ENCODE measurements at regions of chr5 and their contacts with region 1.

Region 1: GRCh38 chr5:79448336-79448735 is 65.6 kb downstream of the HOMER1 start:
- DNase-seq: no peak
- ATAC-seq: no peak
- H3K4me3 ChIP-seq: no peak overlapping the region
- H3K4me3 Mint-ChIP-seq: no peak overlapping the region
- H3K27ac ChIP-seq: no peak overlapping the region
- H3K27ac Mint-ChIP-seq: no peak overlapping the region
- H3K4me1 ChIP-seq: no peaks in the 10 kb centered on the region
- H3K4me1 Mint-ChIP-seq: no peaks in the 10 kb centered on the region
- H3K27me3 ChIP-seq: no peaks in the 10 kb centered on the region
- H3K27me3 Mint-ChIP-seq: no peaks in the 10 kb centered on the region
- CTCF ChIP-seq: no peak

Region 2: GRCh38 chr5:79120216-79120615 is 328.1 kb before region 1 on chr5:
- CTCF ChIA-PET with region 1: no interaction called
- POLR2A ChIA-PET with region 1: no interaction called
- intact Hi-C with region 1: no loop called
- DNase-seq: no peak
- ATAC-seq: no peak
- H3K4me3 ChIP-seq: no peak overlapping the region
- H3K4me3 Mint-ChIP-seq: no peak overlapping the region
- H3K27ac ChIP-seq: no peak overlapping the region
- H3K27ac Mint-ChIP-seq: no peak overlapping the region
- H3K4me1 ChIP-seq: no peaks in the 10 kb centered on the region
- H3K4me1 Mint-ChIP-seq: no peaks in the 10 kb centered on the region
- H3K27me3 ChIP-seq: no peaks in the 10 kb centered on the region
- H3K27me3 Mint-ChIP-seq: peaks cover 25% of the 10 kb centered on the region
- CTCF ChIP-seq: no peak

Region 3: DNA sequence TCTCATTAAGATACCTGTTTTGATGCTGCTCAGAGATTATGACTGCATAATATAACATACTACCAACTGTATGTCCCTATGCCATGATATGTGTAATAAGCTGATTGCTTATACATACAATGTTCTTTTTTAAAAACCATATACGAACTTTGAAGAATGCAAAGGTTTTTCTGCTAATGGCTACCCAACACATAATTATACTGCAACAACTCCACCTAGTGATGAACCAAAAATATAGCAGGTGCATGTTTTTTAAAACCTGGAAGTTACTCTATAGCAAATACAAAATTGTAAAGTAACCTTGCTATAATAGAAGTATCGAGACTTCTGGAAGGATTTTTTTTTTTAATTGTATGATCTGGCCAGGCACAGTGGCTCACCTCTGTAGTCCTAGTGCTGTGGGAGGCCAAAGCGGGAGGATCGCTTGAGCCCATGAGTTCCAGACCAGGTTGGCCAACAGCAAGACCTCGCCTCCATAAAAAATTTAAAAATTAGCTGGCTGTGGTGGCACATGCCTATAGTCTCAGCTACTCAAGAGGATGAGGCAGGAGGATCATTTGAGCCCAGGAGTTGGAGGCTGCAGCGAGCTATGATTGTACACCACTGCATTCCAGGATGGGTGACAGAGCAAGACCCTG is 16.5 kb after region 1 on chr5:
- CTCF ChIA-PET with region 1: interaction called, 10 read pairs
- POLR2A ChIA-PET with region 1: no interaction called
- intact Hi-C with region 1: no loop called
- DNase-seq: peak; percentile 27
- ATAC-seq: no peak
- H3K4me3 ChIP-seq: no peak overlapping the region
- H3K4me3 Mint-ChIP-seq: no peak overlapping the region
- H3K27ac ChIP-seq: no peak overlapping the region
- H3K27ac Mint-ChIP-seq: no peak overlapping the region
- H3K4me1 ChIP-seq: no peaks in the 10 kb centered on the region
- H3K4me1 Mint-ChIP-seq: peaks cover 2% of the 10 kb centered on the region
- H3K27me3 ChIP-seq: no peaks in the 10 kb centered on the region
- H3K27me3 Mint-ChIP-seq: peaks cover 3% of the 10 kb centered on the region
- CTCF ChIP-seq: peak; percentile 72